ENCODE measurements at regions of chr10 and their contacts with region 1.

Region 1: GRCh38 chr10:21069929-21070700 is 173.0 kb upstream of the NEBL start:
- DNase-seq: peak; percentile 97
- H3K4me3 ChIP-seq: no peak overlapping the region
- H3K27ac ChIP-seq: no peak overlapping the region
- H3K4me1 ChIP-seq: peaks cover 14% of the 10 kb centered on the region
- H3K27me3 ChIP-seq: peaks cover 61% of the 10 kb centered on the region
- CTCF ChIP-seq: peak; percentile 28

Region 2: DNA sequence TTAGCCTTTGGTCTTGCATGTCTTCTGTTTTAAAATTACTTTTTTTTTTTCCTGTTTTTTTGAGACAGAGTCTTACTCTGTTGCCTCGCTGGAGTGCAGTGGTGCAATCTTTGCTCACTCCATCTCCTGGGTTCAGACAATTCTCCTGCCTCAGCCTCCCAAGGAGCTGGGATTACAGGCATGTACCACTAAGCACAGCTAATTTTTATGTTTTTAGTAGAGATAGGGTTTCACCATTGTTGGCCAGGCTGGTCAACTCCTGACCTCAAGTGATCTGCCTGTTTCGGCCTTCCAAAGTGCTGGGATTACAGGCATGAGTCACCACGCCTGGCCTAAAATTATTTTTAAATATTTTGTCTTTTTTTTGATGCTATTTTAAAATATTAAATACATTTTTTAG is 502.5 kb after region 1 on chr10:
- CTCF ChIA-PET with region 1: no interaction called
- POLR2A ChIA-PET with region 1: interaction called, 12 read pairs
- intact Hi-C with region 1: no loop called
- DNase-seq: no peak
- H3K4me3 ChIP-seq: no peak overlapping the region
- H3K27ac ChIP-seq: no peak overlapping the region
- H3K4me1 ChIP-seq: peaks cover 4% of the 10 kb centered on the region
- H3K27me3 ChIP-seq: no peaks in the 10 kb centered on the region
- CTCF ChIP-seq: no peak

Measured in A673 (cell line).